Aorta (tissue), 5 donors: ENCODE measurements at regions of chr17 and their contacts with region 1.

Region 1: DNA sequence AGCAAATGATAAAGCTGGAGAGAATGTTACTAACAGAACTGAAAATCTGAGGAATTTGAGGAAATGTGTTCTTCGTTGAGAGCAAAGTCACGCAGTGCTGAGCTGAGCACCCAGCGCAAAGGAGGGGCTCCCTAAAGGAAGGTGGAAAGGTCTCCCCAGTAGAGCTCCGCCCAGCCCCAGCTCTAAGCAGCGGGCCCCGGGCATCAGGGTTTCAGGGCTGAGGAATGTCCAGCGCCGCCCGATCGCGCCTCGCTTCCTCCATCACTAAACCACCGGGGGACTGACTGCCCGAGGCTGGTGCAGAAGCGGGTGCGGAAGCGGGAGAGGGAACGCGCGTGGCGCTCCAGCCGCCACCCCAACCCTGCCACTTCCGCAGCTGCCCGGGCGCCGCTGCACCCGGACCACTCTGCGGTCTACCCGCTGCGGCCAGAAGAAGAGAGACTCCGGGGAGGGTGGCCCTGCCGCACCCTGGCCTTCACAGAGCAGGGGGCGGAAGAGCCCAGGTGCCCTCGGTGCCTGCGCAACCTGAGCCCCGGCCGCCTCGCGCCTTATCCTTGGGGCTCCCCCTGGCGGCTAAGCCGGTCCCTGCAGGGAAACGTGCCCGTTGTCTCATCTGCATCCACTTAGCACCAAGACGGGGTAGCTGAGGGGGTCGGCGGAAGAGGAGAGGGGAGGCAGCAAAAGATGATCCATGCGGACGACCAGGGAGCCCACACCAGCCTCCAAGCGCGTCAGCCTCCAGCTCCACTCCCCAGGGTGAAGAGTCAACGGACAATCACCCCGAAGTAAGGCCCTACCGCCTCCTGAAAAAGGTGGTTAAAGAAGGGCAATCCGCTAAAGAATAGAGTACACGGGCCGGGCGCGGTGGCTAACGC is 12.4 kb upstream of the GUCY2D start:
- DNase-seq: peak; percentile 88 to 96
- ATAC-seq: peak; percentile 91
- H3K4me3 ChIP-seq: no peak overlapping the region
- H3K27ac ChIP-seq: no peak overlapping the region
- H3K4me1 ChIP-seq: no peaks in the 10 kb centered on the region
- H3K27me3 ChIP-seq: no peaks in the 10 kb centered on the region

Region 2: GRCh38 chr17:7740481-7741001 is 249.5 kb before region 1 on chr17:
- intact Hi-C with region 1: loop called (anchors 5 kb)
- DNase-seq: no peak
- ATAC-seq: no peak
- H3K4me3 ChIP-seq: no peak overlapping the region
- H3K27ac ChIP-seq: no peak overlapping the region
- H3K4me1 ChIP-seq: no peaks in the 10 kb centered on the region
- H3K27me3 ChIP-seq: no peaks in the 10 kb centered on the region

Region 3: DNA sequence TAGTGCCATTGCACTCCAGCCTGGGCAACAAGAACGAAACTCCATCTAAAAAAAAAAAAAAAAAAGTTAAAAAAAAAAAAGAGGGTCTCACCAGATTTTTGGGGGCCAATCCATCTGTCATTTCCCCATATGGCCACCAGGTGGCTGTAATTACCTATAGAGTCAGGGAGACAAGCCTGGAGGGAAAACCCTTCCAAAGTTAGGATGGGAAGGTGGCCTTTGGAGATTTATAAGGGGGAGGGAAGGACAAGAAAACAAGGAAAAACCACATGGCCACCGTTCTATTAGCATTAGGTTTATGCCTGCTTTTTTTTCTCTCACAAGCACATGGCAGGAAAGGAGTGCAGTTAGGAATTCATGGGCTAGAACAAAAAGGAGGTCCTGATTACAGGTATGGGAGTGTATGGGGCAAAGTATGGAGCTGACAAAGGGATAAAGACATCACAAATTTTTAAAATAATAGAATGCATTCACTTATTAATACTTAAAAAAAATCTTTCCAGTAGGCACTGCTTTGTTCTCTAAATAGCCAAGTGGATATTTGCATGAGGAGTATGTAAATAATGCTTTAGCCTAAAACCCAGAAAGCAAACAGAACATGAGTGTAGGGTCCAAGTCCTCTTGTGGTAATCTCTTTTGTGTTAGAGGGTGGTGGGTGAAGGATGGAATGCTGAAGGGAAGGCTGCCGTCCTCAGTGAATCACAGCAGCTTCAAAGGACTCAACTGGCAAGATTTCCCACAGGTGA is 127.2 kb before region 1 on chr17:
- intact Hi-C with region 1: loop called (anchors 1 to 2 kb)
- DNase-seq: no peak
- ATAC-seq: no peak
- H3K4me3 ChIP-seq: no peak overlapping the region
- H3K27ac ChIP-seq: no peak overlapping the region
- H3K4me1 ChIP-seq: no peaks in the 10 kb centered on the region
- H3K27me3 ChIP-seq: no peaks in the 10 kb centered on the region

Region 4: GRCh38 chr17:7915611-7916382 is 74.2 kb before region 1 on chr17 and contains the start of gene RNF227:
- intact Hi-C with region 1: loop called (anchors 1 to 2 kb)
- DNase-seq: peak; percentile 96 to 97
- ATAC-seq: peak; percentile 92
- H3K4me3 ChIP-seq: peak within 1 kb of the TSS; percentile 3 to 6
- H3K27ac ChIP-seq: peak within 1 kb of the TSS; percentile 76 to 88
- H3K4me1 ChIP-seq: no peaks in the 10 kb centered on the region
- H3K27me3 ChIP-seq: no peaks in the 10 kb centered on the region
- total RNA-seq, gene RNF227: 1.9 to 3.0 TPM

Region 5: DNA sequence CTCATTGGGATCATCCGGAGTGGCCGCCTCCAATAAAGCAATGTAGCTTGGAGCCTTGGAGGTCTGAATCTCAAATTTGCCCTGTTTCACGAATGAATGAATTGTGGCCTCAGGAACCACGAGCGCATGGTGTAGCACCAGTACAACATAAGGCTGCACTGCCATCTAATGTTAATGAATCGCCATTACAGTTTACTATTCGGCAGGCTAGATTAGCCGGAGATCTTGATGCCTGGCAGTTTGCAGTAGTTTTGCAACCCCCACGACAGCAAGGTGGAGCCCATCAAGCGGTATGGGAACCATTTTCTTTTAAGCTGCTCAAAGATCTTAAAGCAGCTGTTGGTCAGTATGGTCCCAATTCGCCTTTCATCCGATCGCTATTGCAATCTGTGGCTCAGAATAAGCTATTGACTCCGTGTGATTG is 67.7 kb after region 1 on chr17:
- intact Hi-C with region 1: loop called in 1 of 2 experiments (anchors 5 kb)
- DNase-seq: peak in 1 of 2 donors; percentile 34
- ATAC-seq: peak; percentile 88
- H3K4me3 ChIP-seq: no peak overlapping the region
- H3K27ac ChIP-seq: no peak overlapping the region
- H3K4me1 ChIP-seq: no peaks in the 10 kb centered on the region
- H3K27me3 ChIP-seq: no peaks in the 10 kb centered on the region

Region 6: DNA sequence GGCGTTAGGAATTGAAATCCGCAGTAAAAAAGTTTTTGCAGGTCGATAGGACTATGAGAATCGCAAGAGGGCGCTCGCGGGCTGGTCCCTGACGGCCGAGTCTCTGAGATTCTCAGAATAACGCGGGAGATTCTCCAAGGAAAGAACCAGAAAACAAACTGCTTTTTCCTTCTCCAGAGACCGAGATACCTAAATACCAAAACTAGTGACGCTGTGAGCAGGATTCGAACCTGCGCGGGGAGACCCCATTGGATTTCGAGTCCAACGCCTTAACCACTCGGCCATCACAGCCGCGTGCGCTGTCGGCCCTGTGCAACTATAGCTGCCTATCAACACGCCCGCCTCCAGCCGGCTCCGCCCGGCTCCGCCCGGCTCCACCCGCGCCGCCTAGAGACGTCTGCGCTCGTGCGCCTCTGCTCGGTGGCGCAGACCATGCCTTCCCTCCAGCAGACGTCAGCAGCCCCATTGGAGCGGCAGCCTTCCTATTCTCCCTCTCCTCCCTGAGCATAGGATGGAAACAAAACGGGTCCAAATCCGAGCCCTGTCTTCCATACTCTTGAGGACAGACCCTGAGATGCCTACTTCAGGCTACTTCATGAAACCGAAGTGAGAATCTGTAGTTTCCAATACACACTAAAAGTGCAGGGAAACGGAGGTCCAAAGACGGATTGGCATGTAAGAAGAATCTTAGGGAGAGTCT is 148.8 kb after region 1 on chr17:
- intact Hi-C with region 1: no loop called
- DNase-seq: peak; percentile 97 to 98
- ATAC-seq: peak; percentile 95
- H3K4me3 ChIP-seq: no peak overlapping the region
- H3K27ac ChIP-seq: peak overlapping the region in 1 of 2 donors; percentile 26
- H3K4me1 ChIP-seq: peaks cover 0 to 1% of the 10 kb centered on the region in 2 donors
- H3K27me3 ChIP-seq: no peaks in the 10 kb centered on the region